OCI-LY7 (cell line): ENCODE measurements at regions of chr1 and their contacts with region 1.

Region 1: GRCh38 chr1:161382214-161383019 is 14.7 kb upstream of the CFAP126 start:
- DNase-seq: peak; percentile 74
- H3K4me3 ChIP-seq: no peak overlapping the region
- H3K27ac ChIP-seq: no peak overlapping the region
- H3K4me1 ChIP-seq: peaks cover 2% of the 10 kb centered on the region
- CTCF ChIP-seq: peak; percentile 87

Region 2: GRCh38 chr1:161192476-161193465 is 189.6 kb before region 1 on chr1:
- CTCF ChIA-PET with region 1: interaction called, 5 read pairs
- POLR2A ChIA-PET with region 1: interaction called, 5 read pairs
- intact Hi-C with region 1: loop called (anchors 5 kb)
- DNase-seq: peak; percentile 86
- H3K4me3 ChIP-seq: no peak overlapping the region
- H3K27ac ChIP-seq: no peak overlapping the region
- H3K4me1 ChIP-seq: peaks cover 28% of the 10 kb centered on the region
- CTCF ChIP-seq: peak; percentile 96

Region 3: DNA sequence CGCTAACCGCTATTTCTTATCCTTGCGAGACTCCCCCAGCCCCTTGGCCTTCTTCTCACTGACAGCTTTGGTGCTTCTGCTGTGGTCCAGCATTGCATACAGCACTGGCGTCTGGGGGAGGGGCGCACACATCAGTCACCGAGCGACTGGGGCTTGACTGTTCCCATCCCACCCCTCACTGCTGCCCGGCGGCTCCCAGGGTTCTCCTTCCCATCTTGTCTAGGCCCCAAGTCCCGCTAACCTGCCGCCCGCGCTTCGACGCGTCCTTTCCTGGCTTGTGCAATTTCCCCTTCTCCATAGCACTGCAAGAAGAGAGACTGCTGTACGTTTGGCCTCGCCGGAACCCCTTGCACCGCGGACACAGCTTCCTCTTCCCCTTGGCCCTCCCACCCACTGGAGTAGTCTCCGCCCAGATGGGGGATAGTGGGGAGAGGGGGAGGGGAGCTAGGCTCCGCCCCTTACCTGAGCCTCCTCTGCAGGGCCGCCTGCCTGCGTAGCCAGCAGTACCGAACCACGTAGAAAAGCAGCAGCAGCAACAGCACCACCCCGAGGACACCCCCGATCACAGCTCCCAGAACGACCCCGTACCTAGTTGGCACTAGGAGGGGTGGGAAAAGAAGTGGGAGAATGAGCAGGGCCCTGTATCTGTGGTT is 76.4 kb before region 1 on chr1:
- CTCF ChIA-PET with region 1: no interaction called
- POLR2A ChIA-PET with region 1: no interaction called
- intact Hi-C with region 1: loop called (anchors 5 kb)
- DNase-seq: peak; percentile 95
- H3K4me3 ChIP-seq: peak overlapping the region; percentile 76
- H3K27ac ChIP-seq: peak overlapping the region; percentile 47
- H3K4me1 ChIP-seq: peaks cover 28% of the 10 kb centered on the region
- CTCF ChIP-seq: peak; percentile 79